ENCODE measurements at regions of chr10 and their contacts with region 1.

Region 1: GRCh38 chr10:93916257-93917063 is 22.7 kb downstream of the SLC35G1 start:
- DNase-seq: peak in 1 of 2 experiments; percentile 56
- H3K4me3 ChIP-seq: no peak overlapping the region
- H3K4me1 ChIP-seq: no peaks in the 10 kb centered on the region
- H3K27me3 ChIP-seq: no peaks in the 10 kb centered on the region

Region 2: GRCh38 chr10:93566435-93567276 is 349.8 kb before region 1 on chr10 and contains the start of gene FFAR4:
- in situ Hi-C with region 1: no loop called
- DNase-seq: no peak
- H3K4me3 ChIP-seq: no peak within 1 kb of the TSS
- H3K4me1 ChIP-seq: no peaks in the 10 kb centered on the region
- H3K27me3 ChIP-seq: peaks cover 19% of the 10 kb centered on the region

Region 3: DNA sequence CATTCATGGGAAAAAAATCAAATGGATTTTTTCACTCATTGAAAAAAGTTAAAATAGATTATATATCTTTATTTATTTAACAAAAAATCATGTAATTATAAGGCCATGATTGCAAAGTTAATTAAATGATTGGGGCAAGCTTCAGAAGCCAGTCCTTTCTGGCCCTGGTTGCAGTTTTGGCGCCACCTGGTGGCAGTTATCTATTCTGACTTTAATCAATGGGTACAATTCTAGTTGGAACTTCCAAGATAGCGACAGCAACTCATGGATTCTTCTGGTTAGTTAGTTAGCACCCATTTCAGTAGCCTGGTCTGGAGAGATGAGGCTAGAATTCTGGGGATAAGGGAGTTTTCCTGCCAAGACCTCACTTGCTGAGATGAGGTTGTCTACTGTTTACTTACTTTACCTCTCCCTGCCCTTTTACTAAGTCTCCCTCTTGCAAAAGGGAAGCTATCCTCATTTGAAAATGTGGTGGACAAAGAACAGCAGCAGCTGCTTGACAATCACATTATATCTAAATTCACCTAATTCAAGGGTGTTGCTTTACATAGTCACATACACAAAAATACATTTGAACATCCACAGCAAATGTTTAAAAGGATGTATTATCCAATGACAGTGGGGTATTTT is 403.9 kb after region 1 on chr10:
- in situ Hi-C with region 1: loop called (anchors 10 kb)
- DNase-seq: peak; percentile 60 to 84
- H3K4me3 ChIP-seq: no peak overlapping the region
- H3K4me1 ChIP-seq: no peaks in the 10 kb centered on the region; the same call in 1 of the 2 replicates
- H3K27me3 ChIP-seq: no peaks in the 10 kb centered on the region